ENCODE measurements at regions of chr22 and their contacts with region 1.

Region 1: GRCh38 chr22:38347897-38348750 is 30.9 kb upstream of the CSNK1E start:
- DNase-seq: peak; percentile 97
- H3K4me3 ChIP-seq: no peak overlapping the region
- H3K27ac ChIP-seq: peak overlapping the region; percentile 49
- H3K4me1 ChIP-seq: peaks cover 17% of the 10 kb centered on the region
- H3K27me3 ChIP-seq: no peaks in the 10 kb centered on the region
- CTCF ChIP-seq: no peak

Region 2: GRCh38 chr22:38240734-38241252 is 107.3 kb before region 1 on chr22:
- CTCF ChIA-PET with region 1: no interaction called
- dilution Hi-C with region 1: no loop called
- in situ Hi-C with region 1: no loop called
- intact Hi-C with region 1: loop called (anchors 5 kb)
- DNase-seq: peak; percentile 83
- H3K4me3 ChIP-seq: no peak overlapping the region
- H3K27ac ChIP-seq: peak overlapping the region; percentile 77
- H3K4me1 ChIP-seq: peaks cover 53% of the 10 kb centered on the region
- H3K27me3 ChIP-seq: no peaks in the 10 kb centered on the region
- CTCF ChIP-seq: no peak

Region 3: DNA sequence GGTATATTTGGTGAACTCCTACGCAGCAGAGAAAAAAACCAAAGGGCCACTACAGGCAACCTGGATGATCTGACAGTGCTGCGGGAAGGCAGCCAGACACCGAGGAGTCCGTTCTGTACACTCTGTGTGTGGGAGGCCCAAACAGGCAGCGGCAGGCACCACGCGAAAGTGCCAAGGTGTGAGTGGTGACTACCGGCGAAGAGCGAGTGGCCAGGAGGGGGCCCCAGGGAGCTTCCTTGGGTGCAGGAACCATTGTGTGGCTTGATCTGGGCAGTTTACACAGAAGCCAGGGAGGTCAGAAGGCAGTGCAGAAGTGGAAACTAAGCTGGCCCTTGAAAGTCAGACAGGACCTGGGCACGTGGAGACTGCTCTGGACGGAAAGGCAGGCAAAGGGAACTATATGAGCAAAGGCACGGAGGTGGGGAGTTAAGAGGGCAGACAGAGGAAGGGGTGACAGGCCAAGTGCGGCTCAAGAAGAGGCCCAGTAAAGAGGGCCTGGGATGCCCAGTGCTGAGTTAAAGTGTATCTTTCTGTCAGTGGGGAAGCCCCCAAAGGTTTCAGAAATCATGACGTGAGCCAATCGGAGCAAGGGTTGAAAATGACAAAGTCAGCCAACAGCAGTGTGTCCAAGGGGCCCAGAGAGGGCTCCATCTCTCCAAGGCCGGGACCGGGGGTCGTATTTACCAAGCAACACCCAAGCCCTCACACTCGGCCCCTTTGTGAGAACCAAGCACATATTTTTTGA is 85.9 kb before region 1 on chr22:
- CTCF ChIA-PET with region 1: no interaction called
- dilution Hi-C with region 1: loop called (anchors 5 kb)
- in situ Hi-C with region 1: no loop called
- intact Hi-C with region 1: loop called (anchors 1 kb)
- DNase-seq: peak; percentile 81
- H3K4me3 ChIP-seq: no peak overlapping the region
- H3K27ac ChIP-seq: no peak overlapping the region
- H3K4me1 ChIP-seq: peaks cover 15% of the 10 kb centered on the region
- H3K27me3 ChIP-seq: no peaks in the 10 kb centered on the region
- CTCF ChIP-seq: peak; percentile 51 to 85

Region 4: GRCh38 chr22:38298312-38299000 is 49.7 kb before region 1 on chr22:
- CTCF ChIA-PET with region 1: no interaction called
- dilution Hi-C with region 1: no loop called
- in situ Hi-C with region 1: loop called in 1 of 2 experiments (anchors 5 kb)
- intact Hi-C with region 1: loop called (anchors 1 kb)
- DNase-seq: peak; percentile 100
- H3K4me3 ChIP-seq: no peak overlapping the region
- H3K27ac ChIP-seq: peak overlapping the region; percentile 93
- H3K4me1 ChIP-seq: peaks cover 55% of the 10 kb centered on the region
- H3K27me3 ChIP-seq: no peaks in the 10 kb centered on the region
- CTCF ChIP-seq: peak; percentile 59